ENCODE measurements at regions of chr11 and their contacts with region 1.

Region 1: DNA sequence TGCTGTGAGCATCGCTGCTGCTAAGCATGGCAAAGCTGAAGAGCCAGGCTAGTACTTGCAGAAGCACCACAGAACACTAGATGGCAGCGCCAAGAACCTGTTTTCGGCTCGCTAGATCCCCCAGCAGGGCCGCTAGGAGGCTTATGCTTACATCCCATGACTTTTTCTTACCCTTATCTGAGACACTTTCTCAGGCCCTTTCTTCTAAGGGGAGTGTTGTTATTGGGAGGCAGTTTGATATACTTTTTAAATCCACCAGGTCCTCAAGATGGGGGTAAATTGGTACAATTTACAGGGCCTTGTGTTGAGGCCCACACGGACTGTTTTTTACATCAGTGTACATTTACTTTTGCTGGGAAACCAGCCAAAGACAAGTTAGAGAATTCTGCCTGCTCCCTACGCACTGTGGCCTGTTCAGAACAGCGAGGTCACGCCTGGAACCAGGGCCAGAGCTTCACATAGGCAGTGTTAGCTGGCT is 4.0 kb downstream of the TRIM6 start:
- DNase-seq: no peak
- H3K4me3 ChIP-seq: no peak overlapping the region
- CTCF ChIP-seq: peak; percentile 86

Region 2: GRCh38 chr11:5564259-5565019 is 36.0 kb before region 1 on chr11:
- CTCF ChIA-PET with region 1: no interaction called
- POLR2A ChIA-PET with region 1: no interaction called
- DNase-seq: no peak
- H3K4me3 ChIP-seq: no peak overlapping the region
- CTCF ChIP-seq: no peak

Region 3: GRCh38 chr11:5611627-5612026 is 11.2 kb after region 1 on chr11:
- CTCF ChIA-PET with region 1: interaction called, 23 read pairs
- POLR2A ChIA-PET with region 1: interaction called, 3 read pairs
- DNase-seq: no peak
- H3K4me3 ChIP-seq: no peak overlapping the region
- CTCF ChIP-seq: no peak

Region 4: GRCh38 chr11:5620646-5621521 is 20.5 kb after region 1 on chr11:
- CTCF ChIA-PET with region 1: interaction called, 29 read pairs
- POLR2A ChIA-PET with region 1: interaction called, 8 read pairs
- DNase-seq: peak; percentile 92
- H3K4me3 ChIP-seq: no peak overlapping the region; the same call in 1 of the 2 replicates
- CTCF ChIP-seq: no peak

Measured in AG04449 (cell line).